Tibial artery (tissue), 4 donors: ENCODE measurements at regions of chr1 and their contacts with region 1.

Region 1: GRCh38 chr1:27300341-27301051 is 21.5 kb upstream of the TMEM222 start:
- DNase-seq: peak; percentile 74 to 87
- H3K4me3 ChIP-seq: no peak overlapping the region
- H3K27ac ChIP-seq: no peak overlapping the region
- H3K4me1 ChIP-seq: peaks cover 0 to 35% (median 8%) of the 10 kb centered on the region in 4 donors
- H3K27me3 ChIP-seq: no peaks in the 10 kb centered on the region
- CTCF ChIP-seq: peak; percentile 98

Region 2: GRCh38 chr1:26838474-26839338 is 461.8 kb before region 1 on chr1:
- intact Hi-C with region 1: no loop called
- DNase-seq: no peak
- H3K4me3 ChIP-seq: no peak overlapping the region
- H3K27ac ChIP-seq: no peak overlapping the region
- H3K4me1 ChIP-seq: no peaks in the 10 kb centered on the region
- H3K27me3 ChIP-seq: no peaks in the 10 kb centered on the region
- CTCF ChIP-seq: no peak

Region 3: DNA sequence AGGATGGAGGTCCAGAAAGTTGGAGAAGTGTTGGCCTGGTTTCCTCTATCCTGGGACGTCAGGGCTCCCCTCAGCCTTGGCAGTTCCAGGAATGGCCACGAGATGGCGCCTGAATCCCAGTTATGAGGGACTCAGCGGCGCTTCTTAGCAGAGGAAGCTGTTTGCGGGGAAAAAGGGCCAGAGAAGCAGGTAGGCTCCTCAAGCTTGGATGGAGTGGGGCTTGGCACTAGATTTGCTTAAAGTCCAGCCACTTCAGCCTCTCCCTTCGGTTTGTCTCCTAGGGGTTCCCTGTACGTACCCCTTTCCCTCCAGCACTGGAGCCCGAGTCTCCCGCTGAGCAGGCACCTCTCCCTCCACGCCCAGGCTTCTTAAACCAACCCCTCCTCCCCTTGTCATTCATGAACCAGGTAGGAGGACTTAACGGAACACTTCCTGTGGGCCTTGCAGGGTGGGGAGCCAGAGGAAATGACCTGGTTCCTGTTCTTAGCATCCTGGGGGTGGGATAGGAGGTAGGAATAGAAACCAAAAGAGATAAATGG is 255.8 kb before region 1 on chr1:
- intact Hi-C with region 1: loop called (anchors 10 kb)
- DNase-seq: peak; percentile 90 to 91
- H3K4me3 ChIP-seq: peak overlapping the region; percentile 11 to 29
- H3K27ac ChIP-seq: no peak overlapping the region
- H3K4me1 ChIP-seq: peaks cover 0 to 10% (median 6%) of the 10 kb centered on the region in 4 donors
- H3K27me3 ChIP-seq: peaks cover 0 to 7% of the 10 kb centered on the region in 2 donors
- CTCF ChIP-seq: peak; percentile 98

Region 4: GRCh38 chr1:27267153-27267552 is 33.3 kb before region 1 on chr1:
- intact Hi-C with region 1: no loop called
- DNase-seq: no peak
- H3K4me3 ChIP-seq: no peak overlapping the region
- H3K27ac ChIP-seq: no peak overlapping the region
- H3K4me1 ChIP-seq: no peaks in the 10 kb centered on the region
- H3K27me3 ChIP-seq: no peaks in the 10 kb centered on the region
- CTCF ChIP-seq: no peak

Region 5: DNA sequence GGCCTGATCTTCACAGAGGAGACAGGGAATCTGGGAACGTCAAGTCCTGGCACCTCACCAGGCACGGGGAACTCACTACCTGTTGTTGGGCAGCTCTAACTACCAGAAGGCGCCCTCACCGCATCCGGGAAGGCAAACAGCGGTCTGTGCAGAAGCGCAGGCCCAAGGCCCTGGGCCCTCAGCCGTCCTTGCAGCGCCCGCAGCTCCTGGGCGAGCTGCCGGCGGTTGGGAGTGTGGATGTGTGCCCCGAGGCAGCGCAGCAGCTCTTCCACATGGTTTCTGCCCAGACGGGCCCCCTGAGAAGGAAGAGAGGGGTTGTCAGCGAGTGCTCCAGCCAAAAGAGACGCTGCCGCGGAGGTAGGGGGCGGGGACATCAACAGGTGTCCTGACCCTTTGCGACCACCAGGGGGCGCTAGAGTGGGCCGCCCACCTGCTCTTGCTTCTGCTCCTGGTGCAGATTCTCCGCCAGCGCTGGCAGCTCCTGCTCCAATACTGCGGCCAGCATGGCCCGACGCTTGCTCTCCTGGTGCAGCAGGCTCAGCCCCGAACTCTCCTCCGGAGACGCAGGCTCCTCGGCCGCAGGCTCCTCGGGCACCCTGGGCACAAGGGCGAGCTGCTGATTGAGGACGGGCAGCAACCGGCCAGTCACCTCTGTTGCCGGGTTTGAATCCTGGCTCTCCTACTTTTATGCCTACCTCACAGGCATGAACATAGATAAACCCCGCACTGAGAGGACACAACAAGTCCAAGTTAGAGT is 57.0 kb after region 1 on chr1:
- intact Hi-C with region 1: loop called (anchors 10 kb)
- DNase-seq: peak; percentile 53 to 81
- H3K4me3 ChIP-seq: no peak overlapping the region
- H3K27ac ChIP-seq: no peak overlapping the region
- H3K4me1 ChIP-seq: peaks cover 0 to 6% (median 3%) of the 10 kb centered on the region in 4 donors
- H3K27me3 ChIP-seq: no peaks in the 10 kb centered on the region
- CTCF ChIP-seq: peak; percentile 96 to 97

Region 6: GRCh38 chr1:27392096-27392777 is 91.7 kb after region 1 on chr1 and contains the start of gene GPR3:
- intact Hi-C with region 1: loop called (anchors 2 kb)
- DNase-seq: peak; percentile 86 to 87
- H3K4me3 ChIP-seq: peak within 1 kb of the TSS; percentile 42 to 53
- H3K27ac ChIP-seq: peak within 1 kb of the TSS; percentile 19 to 26
- H3K4me1 ChIP-seq: peaks cover 0 to 27% (median 19%) of the 10 kb centered on the region in 4 donors
- H3K27me3 ChIP-seq: peaks cover 0 to 10% of the 10 kb centered on the region in 2 donors
- CTCF ChIP-seq: peak; percentile 41 to 54